Caco-2 (cell line): ENCODE measurements at regions of chr3 and their contacts with region 1.

Region 1: GRCh38 chr3:102182162-102182561 is 252.7 kb upstream of the ZPLD1 start:
- DNase-seq: peak in 1 of 2 experiments; percentile 46
- H3K4me3 ChIP-seq: no peak overlapping the region
- H3K4me3 Mint-ChIP-seq: no peak overlapping the region
- H3K27ac Mint-ChIP-seq: no peak overlapping the region
- H3K4me1 ChIP-seq: peaks cover 33% of the 10 kb centered on the region
- H3K4me1 Mint-ChIP-seq: no peaks in the 10 kb centered on the region
- H3K27me3 ChIP-seq: no peaks in the 10 kb centered on the region
- H3K27me3 Mint-ChIP-seq: no peaks in the 10 kb centered on the region
- CTCF ChIP-seq: no peak

Region 2: DNA sequence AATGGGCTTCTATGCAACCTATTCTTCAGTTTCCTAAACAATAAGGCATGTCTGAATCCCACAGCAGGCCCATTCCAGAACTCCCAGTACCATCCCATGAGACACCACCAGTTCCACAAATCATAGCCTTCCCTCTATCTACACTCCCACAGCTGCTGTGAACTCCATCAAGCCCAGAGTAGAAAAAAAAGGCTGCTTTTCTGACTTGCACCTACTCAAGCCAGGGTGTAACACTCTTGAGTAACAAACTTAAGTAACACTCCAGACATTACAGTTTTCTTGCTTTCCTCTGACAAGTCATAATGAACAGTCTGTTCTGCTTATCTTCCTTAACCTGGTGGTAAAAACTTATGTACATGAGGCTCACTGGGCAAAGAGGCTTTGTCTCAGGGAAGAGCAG is 49.8 kb before region 1 on chr3:
- CTCF ChIA-PET with region 1: no interaction called
- POLR2A ChIA-PET with region 1: no interaction called
- intact Hi-C with region 1: no loop called
- DNase-seq: no peak
- H3K4me3 ChIP-seq: no peak overlapping the region
- H3K4me3 Mint-ChIP-seq: no peak overlapping the region
- H3K27ac Mint-ChIP-seq: no peak overlapping the region
- H3K4me1 ChIP-seq: no peaks in the 10 kb centered on the region
- H3K4me1 Mint-ChIP-seq: no peaks in the 10 kb centered on the region
- H3K27me3 ChIP-seq: no peaks in the 10 kb centered on the region
- H3K27me3 Mint-ChIP-seq: no peaks in the 10 kb centered on the region
- CTCF ChIP-seq: no peak

Region 3: DNA sequence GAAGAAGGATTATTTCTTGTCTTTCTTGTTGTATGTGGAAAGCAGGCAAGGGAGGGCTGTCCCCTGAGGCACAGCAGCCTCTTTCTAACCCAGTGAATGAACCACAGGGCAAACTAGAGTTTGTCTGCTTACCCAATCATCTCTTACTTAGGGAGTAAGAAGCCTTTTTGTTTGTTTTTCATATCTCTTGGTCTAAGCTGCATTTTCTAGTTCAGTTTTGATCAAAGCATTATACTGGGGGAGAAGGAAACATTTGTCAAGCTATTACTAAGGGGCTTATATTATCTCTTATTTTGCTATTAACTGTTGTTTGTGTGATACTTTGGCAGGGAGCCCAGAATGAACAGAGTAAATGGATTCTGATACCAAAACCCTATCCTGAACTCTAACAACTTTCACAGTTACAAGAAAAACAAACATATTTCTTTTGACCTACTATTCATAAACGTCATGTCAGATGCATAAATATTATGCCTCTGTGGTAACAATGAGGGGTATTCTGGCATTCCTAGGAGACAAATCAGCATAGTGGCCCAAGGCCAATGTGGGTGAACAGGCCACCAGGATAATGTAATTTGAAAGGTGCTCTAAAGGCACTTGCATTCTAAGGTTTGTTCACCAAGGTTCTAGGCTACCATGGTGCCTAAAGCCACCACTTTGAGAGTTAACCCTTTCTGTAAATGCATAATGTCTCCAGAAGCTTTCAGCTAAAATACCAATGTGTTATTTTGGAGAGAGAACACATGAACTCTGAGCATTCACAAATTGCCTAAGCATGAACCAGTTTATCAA is 18.9 kb before region 1 on chr3:
- CTCF ChIA-PET with region 1: no interaction called
- POLR2A ChIA-PET with region 1: no interaction called
- intact Hi-C with region 1: loop called (anchors 1 kb)
- DNase-seq: peak; percentile 24 to 38
- H3K4me3 ChIP-seq: no peak overlapping the region
- H3K4me3 Mint-ChIP-seq: no peak overlapping the region
- H3K27ac Mint-ChIP-seq: no peak overlapping the region
- H3K4me1 ChIP-seq: peaks cover 9% of the 10 kb centered on the region
- H3K4me1 Mint-ChIP-seq: peaks cover 12% of the 10 kb centered on the region
- H3K27me3 ChIP-seq: no peaks in the 10 kb centered on the region
- H3K27me3 Mint-ChIP-seq: no peaks in the 10 kb centered on the region
- CTCF ChIP-seq: no peak

Region 4: GRCh38 chr3:103947062-103947461 is 1764.9 kb after region 1 on chr3:
- CTCF ChIA-PET with region 1: no interaction called
- POLR2A ChIA-PET with region 1: no interaction called
- intact Hi-C with region 1: no loop called
- DNase-seq: peak; percentile 40 to 49
- H3K4me3 ChIP-seq: no peak overlapping the region
- H3K4me3 Mint-ChIP-seq: peak overlapping the region; percentile 66
- H3K27ac Mint-ChIP-seq: peak overlapping the region; percentile 88
- H3K4me1 ChIP-seq: peaks cover 16% of the 10 kb centered on the region
- H3K4me1 Mint-ChIP-seq: peaks cover 17% of the 10 kb centered on the region
- H3K27me3 ChIP-seq: no peaks in the 10 kb centered on the region
- H3K27me3 Mint-ChIP-seq: no peaks in the 10 kb centered on the region
- CTCF ChIP-seq: no peak